ENCODE measurements at regions of chr1 and their contacts with region 1.

Region 1: DNA sequence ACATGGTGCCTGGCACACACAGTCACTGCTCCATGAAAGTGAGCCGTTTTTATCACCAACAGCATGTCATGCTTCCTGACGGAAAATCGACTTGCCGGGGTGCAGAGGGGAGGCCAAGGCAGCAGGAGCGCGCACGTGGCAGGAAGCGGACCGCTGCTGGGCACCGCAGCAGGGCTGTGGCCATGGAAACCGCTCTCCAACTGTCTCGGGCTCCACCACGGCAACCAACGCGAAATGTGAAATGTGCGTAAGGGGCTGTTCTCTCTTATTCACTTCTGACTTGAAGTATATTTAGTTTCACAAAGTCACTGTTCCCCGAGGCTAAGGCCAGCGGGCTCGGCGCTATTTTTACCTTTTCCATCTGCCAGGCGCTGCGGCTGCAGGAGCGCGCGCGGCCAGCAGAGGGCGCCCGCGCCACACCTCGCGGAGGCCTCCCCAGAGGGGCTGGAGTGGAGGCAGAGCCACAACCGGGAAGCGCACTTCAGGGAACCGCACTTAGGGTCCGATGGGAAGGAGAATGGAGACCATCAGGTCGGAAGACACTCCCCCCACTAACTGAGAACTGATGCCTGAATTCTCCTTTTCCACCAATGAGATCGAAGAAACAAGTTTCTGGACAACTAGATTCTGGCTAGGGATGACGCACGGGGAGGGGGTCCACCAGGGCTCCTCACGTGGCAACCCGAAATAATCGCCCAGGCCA is 19.7 kb downstream of the RCC2 start:
- DNase-seq: peak in 1 of 2 donors; percentile 86
- H3K4me3 ChIP-seq: peak overlapping the region in 1 of 2 donors; percentile 21
- H3K27ac ChIP-seq: peak overlapping the region in 1 of 2 donors; percentile 21
- H3K4me1 ChIP-seq: no peaks in the 10 kb centered on the region
- H3K27me3 ChIP-seq: no peaks in the 10 kb centered on the region
- CTCF ChIP-seq: peak; percentile 98 to 100 (median 100)

Region 2: DNA sequence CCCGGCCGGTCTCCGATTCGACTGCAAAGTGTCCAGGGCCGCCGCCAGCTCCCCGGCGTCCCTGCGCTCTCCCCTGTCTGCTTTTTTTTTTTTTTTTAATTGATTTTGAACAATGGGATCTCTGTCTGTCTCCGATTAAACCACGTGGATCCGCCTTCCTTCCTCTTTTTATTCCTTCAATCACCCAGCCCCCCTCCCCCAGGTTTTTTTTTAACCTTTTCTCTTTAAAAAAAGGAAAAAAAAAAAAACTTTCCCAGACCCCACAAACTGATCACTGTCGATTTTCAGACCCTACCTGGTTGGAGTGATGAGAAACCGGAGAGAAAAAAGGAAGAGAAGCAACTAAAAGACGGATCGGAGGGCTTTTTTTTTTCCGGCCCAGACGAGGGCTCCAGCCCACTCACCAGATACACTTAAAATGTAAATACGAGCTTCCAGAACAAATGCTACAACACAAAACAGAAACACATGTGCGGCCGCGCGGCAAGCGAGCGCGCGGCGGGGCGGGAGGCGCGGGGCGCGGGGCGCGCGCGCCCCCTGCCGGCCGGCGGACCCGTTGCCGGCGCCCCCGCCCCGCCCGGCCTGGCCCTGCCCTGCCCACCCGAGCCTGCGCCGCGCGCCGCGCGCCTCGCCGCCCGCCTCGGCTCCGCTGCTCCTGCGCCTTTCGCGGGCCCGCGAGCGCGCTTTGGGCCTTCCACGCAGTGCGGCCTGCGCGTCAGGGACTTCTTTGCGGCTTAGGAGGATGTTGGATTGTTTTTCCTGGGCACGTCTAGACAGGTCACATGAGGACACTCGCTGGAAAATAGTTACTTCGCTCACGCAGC is 19.7 kb after region 1 on chr1 and contains the start of gene RCC2:
- intact Hi-C with region 1: loop called (anchors 1 kb)
- DNase-seq: peak in 1 of 2 donors; percentile 77
- H3K4me3 ChIP-seq: peak within 1 kb of the TSS; percentile 75 to 88
- H3K27ac ChIP-seq: peak within 1 kb of the TSS; percentile 26 to 73
- H3K4me1 ChIP-seq: peaks cover 6 to 8% of the 10 kb centered on the region in 2 donors
- H3K27me3 ChIP-seq: no peaks in the 10 kb centered on the region
- CTCF ChIP-seq: peak in 1 of 3 experiments; percentile 3
- total RNA-seq, gene RCC2: 57.2 TPM

Region 3: GRCh38 chr1:17520071-17520813 is 100.5 kb after region 1 on chr1:
- intact Hi-C with region 1: no loop called
- DNase-seq: no peak
- H3K4me3 ChIP-seq: no peak overlapping the region
- H3K27ac ChIP-seq: no peak overlapping the region
- H3K4me1 ChIP-seq: no peaks in the 10 kb centered on the region
- H3K27me3 ChIP-seq: no peaks in the 10 kb centered on the region
- CTCF ChIP-seq: no peak

Measured in ascending aorta (tissue), 2 donors.